ENCODE measurements at regions of chr5 and their contacts with region 1.

Region 1: GRCh38 chr5:112848116-112848811 is 12.8 kb upstream of the SRP19 start:
- DNase-seq: peak; percentile 51
- ATAC-seq: peak; percentile 100
- H3K4me3 ChIP-seq: no peak overlapping the region
- H3K27ac ChIP-seq: no peak overlapping the region
- H3K4me1 ChIP-seq: no peaks in the 10 kb centered on the region
- H3K27me3 ChIP-seq: no peaks in the 10 kb centered on the region
- CTCF ChIP-seq: peak; percentile 61 to 62 (median 61)
- EP300 ChIP-seq: no peak
- POLR2A ChIP-seq: no peak
- RAD21 ChIP-seq: peak; percentile 37; the same call in 1 of the 2 replicates

Region 2: DNA sequence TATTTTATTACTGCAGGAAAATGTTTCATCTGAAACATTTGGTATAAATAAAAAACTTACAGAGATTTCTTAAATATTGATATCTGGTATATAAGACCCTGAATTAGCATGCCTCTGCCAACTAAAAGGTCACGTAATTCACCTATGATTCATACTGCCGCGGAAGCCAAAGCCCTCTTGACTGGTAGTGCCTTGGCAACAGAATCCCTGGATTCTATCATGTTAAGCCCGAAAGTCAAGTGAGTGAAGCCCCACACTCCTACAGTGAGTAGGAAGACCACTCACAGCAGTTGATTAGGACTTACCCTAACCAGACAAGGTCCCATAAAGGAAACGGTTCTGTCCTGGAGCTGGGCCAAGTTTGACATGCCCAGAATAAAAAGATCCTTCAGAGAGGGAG is 915.6 kb before region 1 on chr5:
- CTCF ChIA-PET with region 1: no interaction called
- POLR2A ChIA-PET with region 1: no interaction called
- RAD21 ChIA-PET with region 1: no interaction called
- SMC1A ChIA-PET with region 1: no interaction called
- in situ Hi-C with region 1: no loop called
- intact Hi-C with region 1: no loop called
- DNase-seq: no peak
- ATAC-seq: no peak
- H3K4me3 ChIP-seq: no peak overlapping the region
- H3K27ac ChIP-seq: no peak overlapping the region
- H3K4me1 ChIP-seq: no peaks in the 10 kb centered on the region
- H3K27me3 ChIP-seq: no peaks in the 10 kb centered on the region
- CTCF ChIP-seq: no peak
- EP300 ChIP-seq: no peak
- POLR2A ChIP-seq: no peak
- RAD21 ChIP-seq: no peak

Region 3: DNA sequence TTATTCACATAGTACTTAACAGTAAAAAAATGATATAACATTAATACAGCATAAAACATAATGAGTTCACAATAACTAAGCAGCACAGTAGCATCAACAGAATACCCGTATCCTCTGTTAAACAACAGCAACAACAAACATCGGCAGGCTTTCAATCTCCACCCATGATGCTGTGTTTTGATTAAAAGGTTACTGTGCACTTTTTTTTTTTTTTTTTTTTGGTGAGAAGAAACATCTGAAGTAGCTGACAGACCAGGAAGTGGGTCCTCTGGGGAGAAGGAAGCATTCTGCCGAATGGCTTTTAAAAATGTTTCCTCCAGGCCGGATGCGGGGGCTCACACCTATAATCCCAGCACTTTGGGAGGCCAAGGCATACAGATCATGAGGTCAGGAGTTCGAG is 711.5 kb before region 1 on chr5:
- CTCF ChIA-PET with region 1: no interaction called
- POLR2A ChIA-PET with region 1: no interaction called
- RAD21 ChIA-PET with region 1: no interaction called
- SMC1A ChIA-PET with region 1: no interaction called
- in situ Hi-C with region 1: no loop called
- intact Hi-C with region 1: no loop called
- DNase-seq: no peak
- ATAC-seq: no peak
- H3K4me3 ChIP-seq: no peak overlapping the region
- H3K27ac ChIP-seq: no peak overlapping the region
- H3K4me1 ChIP-seq: no peaks in the 10 kb centered on the region
- H3K27me3 ChIP-seq: no peaks in the 10 kb centered on the region
- CTCF ChIP-seq: no peak
- EP300 ChIP-seq: no peak
- POLR2A ChIP-seq: no peak
- RAD21 ChIP-seq: no peak

Region 4: DNA sequence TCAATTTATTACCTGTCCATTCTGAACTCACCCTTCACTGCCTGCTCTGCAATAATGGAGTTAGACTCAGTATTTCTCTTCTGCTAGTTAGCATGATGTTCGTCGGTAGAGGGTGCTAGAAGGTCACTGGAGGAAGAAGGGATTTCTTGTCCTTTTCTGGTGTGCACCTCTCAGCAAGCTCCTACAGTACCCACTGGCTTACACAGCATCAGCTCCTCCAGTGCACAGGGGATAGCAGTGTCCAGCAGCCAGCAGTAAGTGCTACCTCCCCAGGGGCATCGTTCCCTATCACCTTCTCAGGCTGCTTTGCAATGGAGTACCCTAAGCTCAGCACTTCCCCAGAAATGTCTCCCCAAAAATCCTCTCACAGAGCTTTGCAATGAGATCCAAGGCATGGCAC is 156.5 kb before region 1 on chr5:
- CTCF ChIA-PET with region 1: interaction called, 7 read pairs
- POLR2A ChIA-PET with region 1: no interaction called
- RAD21 ChIA-PET with region 1: interaction called, 3 read pairs
- SMC1A ChIA-PET with region 1: interaction called, 8 read pairs
- in situ Hi-C with region 1: no loop called
- intact Hi-C with region 1: loop called (anchors 5 kb)
- DNase-seq: peak; percentile 19
- ATAC-seq: peak; percentile 89
- H3K4me3 ChIP-seq: no peak overlapping the region
- H3K27ac ChIP-seq: no peak overlapping the region
- H3K4me1 ChIP-seq: peaks cover 9% of the 10 kb centered on the region
- H3K27me3 ChIP-seq: peaks cover 0 to 1% of the 10 kb centered on the region in 2 experiments; a peak in 2 of 4 replicates
- CTCF ChIP-seq: peak; percentile 46 to 56 (median 50); a peak in 4 of 6 replicates
- EP300 ChIP-seq: no peak
- POLR2A ChIP-seq: no peak
- RAD21 ChIP-seq: peak; percentile 79

Region 5: GRCh38 chr5:112860929-112861637 is 12.8 kb after region 1 on chr5 and contains the start of gene SRP19:
- CTCF ChIA-PET with region 1: interaction called, 28 read pairs
- POLR2A ChIA-PET with region 1: interaction called, 15 read pairs
- RAD21 ChIA-PET with region 1: interaction called, 4 read pairs
- SMC1A ChIA-PET with region 1: interaction called, 7 read pairs
- in situ Hi-C with region 1: no loop called
- intact Hi-C with region 1: no loop called
- DNase-seq: peak; percentile 82
- ATAC-seq: peak; percentile 96
- H3K4me3 ChIP-seq: peak within 1 kb of the TSS; percentile 94
- H3K27ac ChIP-seq: peak within 1 kb of the TSS; percentile 90
- H3K4me1 ChIP-seq: peaks cover 8% of the 10 kb centered on the region
- H3K27me3 ChIP-seq: no peaks in the 10 kb centered on the region
- CTCF ChIP-seq: no peak
- EP300 ChIP-seq: no peak
- POLR2A ChIP-seq: peak; percentile 77
- RAD21 ChIP-seq: no peak
- polyA plus RNA-seq, gene SRP19: 301 to 379 TPM

Region 6: GRCh38 chr5:112915831-112916230 is 67.6 kb after region 1 on chr5:
- CTCF ChIA-PET with region 1: interaction called, 10 read pairs
- POLR2A ChIA-PET with region 1: interaction called, 3 read pairs
- RAD21 ChIA-PET with region 1: interaction called, 3 read pairs
- SMC1A ChIA-PET with region 1: interaction called, 4 read pairs
- in situ Hi-C with region 1: no loop called
- intact Hi-C with region 1: no loop called
- DNase-seq: no peak
- ATAC-seq: peak; percentile 69
- H3K4me3 ChIP-seq: no peak overlapping the region
- H3K27ac ChIP-seq: no peak overlapping the region
- H3K4me1 ChIP-seq: peaks cover 16% of the 10 kb centered on the region
- H3K27me3 ChIP-seq: no peaks in the 10 kb centered on the region
- CTCF ChIP-seq: no peak
- EP300 ChIP-seq: no peak
- POLR2A ChIP-seq: no peak
- RAD21 ChIP-seq: no peak

Region 7: GRCh38 chr5:112958093-112959088 is 110.1 kb after region 1 on chr5:
- CTCF ChIA-PET with region 1: interaction called, 4 read pairs
- POLR2A ChIA-PET with region 1: no interaction called
- RAD21 ChIA-PET with region 1: interaction called, 11 read pairs
- SMC1A ChIA-PET with region 1: no interaction called
- in situ Hi-C with region 1: no loop called
- intact Hi-C with region 1: no loop called
- DNase-seq: peak; percentile 57
- ATAC-seq: peak; percentile 83
- H3K4me3 ChIP-seq: 0 out of 2 replicates have a peak overlapping the region, but pooled peaks have one; percentile 25
- H3K27ac ChIP-seq: no peak overlapping the region; the same call in 1 of the 2 replicates
- H3K4me1 ChIP-seq: peaks cover 29% of the 10 kb centered on the region
- H3K27me3 ChIP-seq: no peaks in the 10 kb centered on the region
- CTCF ChIP-seq: no peak
- EP300 ChIP-seq: no peak
- POLR2A ChIP-seq: no peak
- RAD21 ChIP-seq: no peak